Gastrocnemius medialis (tissue), 4 donors: ENCODE measurements at regions of chr2 and their contacts with region 1.

Region 1: GRCh38 chr2:38508311-38509039 is 94.3 kb downstream of the HNRNPLL start:
- DNase-seq: peak; percentile 83 to 92
- ATAC-seq: peak; percentile 39 to 42
- H3K4me3 ChIP-seq: no peak overlapping the region
- H3K27ac ChIP-seq: peak overlapping the region; percentile 55 to 79 (median 78)
- H3K4me1 ChIP-seq: peaks cover 38 to 53% of the 10 kb centered on the region in 2 donors
- H3K27me3 ChIP-seq: no peaks in the 10 kb centered on the region
- CTCF ChIP-seq: peak in 1 of 5 experiments; percentile 28
- POLR2A ChIP-seq: peak in 1 of 2 donors; percentile 30

Region 2: DNA sequence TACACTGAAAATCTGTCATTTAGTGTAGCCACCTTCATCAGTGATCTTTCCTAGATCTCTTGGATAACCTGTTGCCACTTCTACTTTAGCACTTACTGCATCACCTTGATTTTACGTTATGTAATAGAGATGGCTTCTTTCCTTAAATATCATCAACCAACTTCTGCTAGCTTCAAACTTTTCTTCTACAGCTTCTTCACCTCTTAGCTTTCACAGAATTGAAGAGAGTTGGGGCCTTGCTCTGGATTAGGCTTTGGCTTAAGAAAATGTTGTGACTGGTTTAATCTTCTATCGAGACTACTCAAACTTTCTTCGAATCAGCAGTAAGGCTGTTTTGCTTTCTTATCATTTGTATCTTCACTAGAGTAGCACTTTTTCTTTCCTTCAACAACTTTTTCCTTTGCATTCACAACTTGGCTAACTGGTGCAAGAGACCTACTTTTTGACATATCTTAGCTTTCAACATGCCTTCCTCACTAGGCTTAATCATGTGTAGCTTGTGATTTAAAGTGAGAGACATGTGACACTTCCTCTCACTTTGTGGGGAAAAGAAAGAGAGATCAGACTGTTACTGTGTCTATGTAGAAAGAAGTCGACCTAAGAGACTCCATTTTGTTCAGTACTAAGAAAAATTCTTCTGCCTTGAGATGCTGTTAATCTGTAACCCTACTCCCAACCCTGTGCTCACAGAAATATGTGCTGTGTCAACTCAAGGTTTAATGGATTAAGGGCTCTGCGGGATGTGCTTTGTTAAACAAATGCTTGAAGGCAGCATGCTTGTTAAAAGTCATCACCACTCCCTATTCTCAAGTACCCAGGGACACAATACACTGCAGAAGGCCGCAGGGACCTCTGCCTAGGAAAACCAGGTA is 231.0 kb before region 1 on chr2:
- in situ Hi-C with region 1: no loop called
- intact Hi-C with region 1: no loop called
- DNase-seq: no peak
- ATAC-seq: no peak
- H3K4me3 ChIP-seq: no peak overlapping the region
- H3K27ac ChIP-seq: no peak overlapping the region
- H3K4me1 ChIP-seq: no peaks in the 10 kb centered on the region
- H3K27me3 ChIP-seq: no peaks in the 10 kb centered on the region
- CTCF ChIP-seq: no peak
- POLR2A ChIP-seq: no peak

Region 3: GRCh38 chr2:38602732-38603401 is 94.4 kb after region 1 on chr2 and contains the start of gene HNRNPLL:
- in situ Hi-C with region 1: no loop called
- intact Hi-C with region 1: no loop called
- DNase-seq: peak; percentile 97 to 99
- ATAC-seq: peak; percentile 86 to 88
- H3K4me3 ChIP-seq: peak within 1 kb of the TSS; percentile 80 to 93 (median 90)
- H3K27ac ChIP-seq: peak within 1 kb of the TSS; percentile 94 to 98 (median 98)
- H3K4me1 ChIP-seq: peaks cover 34 to 43% of the 10 kb centered on the region in 2 donors
- H3K27me3 ChIP-seq: no peaks in the 10 kb centered on the region
- CTCF ChIP-seq: no peak
- POLR2A ChIP-seq: peak; percentile 98
- total RNA-seq, gene HNRNPLL: 20.0 to 42.9 (median 21.9) TPM

Region 4: DNA sequence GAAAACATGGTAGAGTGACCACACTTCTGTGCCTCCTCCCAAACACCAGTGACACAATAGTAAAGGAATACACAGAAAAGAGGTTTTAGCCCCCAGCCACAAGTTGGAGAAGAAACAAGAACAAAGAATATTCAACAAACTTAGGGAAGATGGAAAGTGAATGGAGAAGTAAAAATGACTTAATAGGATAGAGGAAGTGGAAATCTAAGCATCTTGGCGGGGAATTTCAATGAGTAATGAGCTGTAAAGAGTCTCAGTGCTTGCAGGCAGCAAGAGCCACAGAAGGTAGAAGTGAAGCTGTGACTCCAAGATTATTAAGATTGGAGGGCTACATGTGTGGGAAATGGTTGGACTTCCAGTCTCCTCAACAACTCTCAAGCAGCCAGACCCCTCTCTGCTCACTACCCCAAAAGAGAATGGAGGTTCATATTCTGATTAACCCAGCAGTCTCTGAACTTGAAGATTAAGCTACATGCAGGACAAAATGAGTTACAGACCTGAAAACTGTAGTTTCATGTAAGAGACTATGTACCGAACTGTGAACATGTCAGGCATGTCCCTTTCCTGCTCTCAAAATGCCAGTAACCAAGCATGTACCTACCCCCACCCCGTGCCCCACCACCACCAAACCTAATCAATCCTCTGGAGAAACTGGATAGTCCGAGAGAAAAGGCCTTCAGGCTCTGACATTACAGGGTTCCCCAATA is 111.1 kb after region 1 on chr2:
- in situ Hi-C with region 1: no loop called
- intact Hi-C with region 1: no loop called
- DNase-seq: no peak
- ATAC-seq: no peak
- H3K4me3 ChIP-seq: no peak overlapping the region
- H3K27ac ChIP-seq: no peak overlapping the region
- H3K4me1 ChIP-seq: no peaks in the 10 kb centered on the region
- H3K27me3 ChIP-seq: no peaks in the 10 kb centered on the region
- CTCF ChIP-seq: no peak
- POLR2A ChIP-seq: no peak

Region 5: DNA sequence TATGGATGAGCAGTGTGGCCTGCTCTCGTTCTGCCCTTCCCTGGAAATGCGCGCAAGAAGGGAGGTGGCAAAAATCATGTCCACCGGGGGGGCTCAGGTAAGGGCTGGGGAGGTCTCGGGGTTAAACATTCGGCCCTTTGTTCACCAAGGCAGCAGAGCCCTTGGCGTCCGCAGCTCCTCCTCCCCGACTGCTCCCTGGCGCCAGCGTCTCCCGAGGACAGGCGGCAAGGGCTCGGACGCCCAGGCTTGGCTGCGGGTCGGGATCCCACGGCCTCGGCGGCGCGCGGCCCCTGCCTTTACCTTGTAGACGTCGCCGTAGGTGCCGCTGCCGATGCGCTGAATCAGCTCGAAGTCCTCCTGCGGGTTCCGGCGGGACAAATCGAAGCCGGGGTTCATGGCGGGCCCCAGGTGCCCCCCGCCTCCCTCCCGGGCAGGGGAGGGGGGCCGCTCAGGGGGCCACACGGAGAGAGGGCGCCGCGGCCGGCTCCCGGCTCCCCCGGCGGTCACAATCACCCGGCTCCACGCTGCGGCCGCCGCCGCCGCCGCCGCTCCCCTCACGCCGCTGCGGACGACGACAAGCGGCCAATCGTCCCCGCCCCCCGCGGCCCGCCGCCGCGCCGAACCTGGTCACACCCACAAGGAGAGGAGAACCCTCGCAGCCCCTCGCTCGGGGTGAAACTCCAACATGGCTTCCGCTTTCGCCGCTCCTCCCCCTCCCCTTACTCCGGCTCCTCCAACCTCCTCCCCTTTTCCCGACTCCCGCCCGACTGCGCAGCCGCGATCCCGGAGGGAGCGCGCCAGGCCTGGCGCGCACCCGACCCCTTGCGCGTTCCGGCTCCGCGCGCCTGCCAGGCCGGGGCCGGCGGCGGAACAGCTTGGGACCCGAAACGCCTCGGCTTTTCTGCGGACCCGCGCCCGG is 928.4 kb after region 1 on chr2 and contains the start of gene MAP4K3:
- in situ Hi-C with region 1: no loop called
- intact Hi-C with region 1: loop called (anchors 10 kb)
- DNase-seq: peak; percentile 92 to 93
- ATAC-seq: peak; percentile 82 to 83
- H3K4me3 ChIP-seq: peak within 1 kb of the TSS; percentile 89 to 97 (median 92)
- H3K27ac ChIP-seq: peak within 1 kb of the TSS; percentile 96 to 98 (median 98)
- H3K4me1 ChIP-seq: peaks cover 57 to 59% of the 10 kb centered on the region in 2 donors
- H3K27me3 ChIP-seq: no peaks in the 10 kb centered on the region
- CTCF ChIP-seq: peak in 1 of 5 experiments; percentile 11
- POLR2A ChIP-seq: peak; percentile 95 to 97
- total RNA-seq, gene MAP4K3: 23.0 to 52.1 (median 31.8) TPM